OCI-LY7 (cell line): ENCODE measurements at regions of chr10 and their contacts with region 1.

Region 1: GRCh38 chr10:45672181-45673073 is at the start of gene ZFAND4:
- DNase-seq: peak; percentile 97
- H3K4me3 ChIP-seq: peak within 1 kb of the TSS; percentile 89
- H3K27ac ChIP-seq: peak within 1 kb of the TSS; percentile 71
- H3K4me1 ChIP-seq: peaks cover 9% of the 10 kb centered on the region
- CTCF ChIP-seq: peak; percentile 72
- total RNA-seq, gene ZFAND4: 15.1 and 18.6 TPM in 2 replicates

Region 2: DNA sequence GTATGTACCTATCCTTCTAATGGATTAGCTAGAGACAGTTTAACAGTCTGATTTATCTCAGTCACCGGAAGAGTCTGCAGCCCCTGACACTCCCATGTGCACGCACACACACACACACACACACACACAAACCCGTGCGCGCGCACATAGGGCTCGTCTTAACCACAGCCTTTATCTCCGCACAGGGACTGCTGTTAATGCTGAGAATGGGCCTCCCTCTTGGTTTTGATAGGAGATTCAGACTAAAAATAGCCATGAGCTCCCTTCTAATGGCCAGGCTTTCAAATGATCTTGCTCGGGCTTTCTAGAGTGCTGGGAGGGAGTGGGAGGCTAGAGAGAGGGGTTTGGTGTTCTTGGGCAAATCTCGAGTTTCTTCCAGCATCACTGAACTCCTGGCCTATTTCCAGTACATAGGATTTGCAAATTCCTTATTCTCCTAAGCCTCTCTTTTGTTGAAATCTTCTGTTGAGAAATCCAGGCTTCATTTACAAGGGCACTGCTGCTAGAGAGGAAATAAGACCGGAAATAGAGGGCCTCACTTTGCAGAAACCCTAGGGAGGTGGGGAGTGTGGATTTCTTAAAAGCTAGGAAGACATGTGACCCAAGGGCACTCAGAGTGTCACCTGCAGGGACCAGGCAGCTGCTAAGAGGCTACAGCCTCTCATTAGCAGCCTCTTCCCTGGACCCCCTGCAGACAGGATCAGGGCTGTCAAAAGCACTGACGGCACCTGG is 758.9 kb before region 1 on chr10:
- CTCF ChIA-PET with region 1: no interaction called
- POLR2A ChIA-PET with region 1: no interaction called
- intact Hi-C with region 1: no loop called
- DNase-seq: peak; percentile 31
- H3K4me3 ChIP-seq: no peak overlapping the region
- H3K27ac ChIP-seq: no peak overlapping the region
- H3K4me1 ChIP-seq: peaks cover 9% of the 10 kb centered on the region
- CTCF ChIP-seq: no peak

Region 3: DNA sequence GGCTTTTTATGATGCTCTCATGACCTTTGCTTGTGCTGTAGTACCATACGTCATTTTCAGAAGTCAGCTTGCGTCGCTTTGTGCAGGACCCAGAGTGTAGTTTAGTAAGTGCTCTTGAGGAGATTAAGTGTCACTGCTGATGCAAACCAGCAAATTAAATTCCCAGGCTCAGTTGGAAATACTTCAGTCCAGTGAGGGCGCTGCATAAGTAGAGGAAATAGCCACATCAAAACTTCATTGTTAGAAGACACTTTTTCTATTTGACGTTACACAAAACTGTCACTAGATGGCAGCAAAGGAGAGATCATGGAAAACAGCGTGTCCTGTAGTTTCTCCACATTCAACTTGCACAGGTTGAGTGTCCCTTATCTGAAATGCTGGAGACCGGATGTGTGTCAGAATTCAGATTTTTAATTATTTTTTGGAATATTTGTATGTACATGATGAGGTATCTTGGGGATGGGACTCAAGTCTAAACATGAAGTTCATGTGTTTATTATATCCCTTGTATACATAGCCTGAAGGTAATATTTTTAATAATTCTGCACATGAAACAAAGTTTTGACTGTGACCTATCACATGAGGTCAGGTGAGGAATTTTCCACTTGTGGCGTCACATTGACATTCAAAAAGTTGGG is 663.8 kb before region 1 on chr10:
- CTCF ChIA-PET with region 1: no interaction called
- POLR2A ChIA-PET with region 1: no interaction called
- intact Hi-C with region 1: loop called (anchors 10 kb)
- DNase-seq: peak; percentile 84
- H3K4me3 ChIP-seq: no peak overlapping the region
- H3K27ac ChIP-seq: no peak overlapping the region
- H3K4me1 ChIP-seq: no peaks in the 10 kb centered on the region
- CTCF ChIP-seq: peak; percentile 96

Region 4: DNA sequence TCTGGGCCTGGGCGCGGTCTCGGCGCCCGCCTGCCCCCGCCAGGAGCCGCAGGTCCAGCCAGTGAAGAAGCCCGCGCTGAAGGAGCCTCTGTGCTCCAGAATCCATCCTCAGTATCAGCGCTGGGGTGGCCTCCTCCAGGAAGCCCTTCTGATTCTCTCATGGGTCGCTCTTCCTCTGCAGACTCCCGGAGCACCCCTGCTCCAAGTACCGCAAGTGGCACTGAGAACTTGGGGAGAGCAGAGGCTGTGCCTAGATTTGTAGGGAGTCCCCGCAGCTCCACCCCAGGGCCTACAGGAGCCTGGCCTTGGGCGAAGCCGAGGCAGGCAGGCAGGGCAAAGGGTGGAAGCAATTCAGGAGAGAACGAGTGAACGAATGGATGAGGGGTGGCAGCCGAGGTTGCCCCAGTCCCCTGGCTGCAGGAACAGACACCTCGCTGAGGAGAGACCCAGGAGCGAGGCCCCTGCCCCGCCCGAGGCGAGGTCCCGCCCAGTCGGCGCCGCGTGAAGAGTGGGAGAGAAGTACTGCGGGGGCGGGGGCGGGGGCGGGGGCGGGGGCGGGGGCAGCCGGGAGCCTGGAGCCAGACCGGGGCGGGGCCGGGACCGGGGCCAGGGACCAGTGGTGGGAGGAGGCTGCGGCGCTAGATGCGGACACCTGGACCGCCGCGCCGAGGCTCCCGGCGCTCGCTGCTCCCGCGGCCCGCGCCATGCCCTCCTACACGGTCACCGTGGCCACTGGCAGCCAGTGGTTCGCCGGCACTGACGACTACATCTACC is 298.7 kb before region 1 on chr10 and contains the start of gene ALOX5:
- CTCF ChIA-PET with region 1: no interaction called
- POLR2A ChIA-PET with region 1: interaction called, 3 read pairs
- intact Hi-C with region 1: loop called (anchors 5 kb)
- DNase-seq: peak; percentile 88
- H3K4me3 ChIP-seq: peak within 1 kb of the TSS; percentile 89
- H3K27ac ChIP-seq: peak within 1 kb of the TSS; percentile 98
- H3K4me1 ChIP-seq: peaks cover 63% of the 10 kb centered on the region
- CTCF ChIP-seq: no peak
- total RNA-seq, gene ALOX5: 146 and 164 TPM in 2 replicates

Region 5: DNA sequence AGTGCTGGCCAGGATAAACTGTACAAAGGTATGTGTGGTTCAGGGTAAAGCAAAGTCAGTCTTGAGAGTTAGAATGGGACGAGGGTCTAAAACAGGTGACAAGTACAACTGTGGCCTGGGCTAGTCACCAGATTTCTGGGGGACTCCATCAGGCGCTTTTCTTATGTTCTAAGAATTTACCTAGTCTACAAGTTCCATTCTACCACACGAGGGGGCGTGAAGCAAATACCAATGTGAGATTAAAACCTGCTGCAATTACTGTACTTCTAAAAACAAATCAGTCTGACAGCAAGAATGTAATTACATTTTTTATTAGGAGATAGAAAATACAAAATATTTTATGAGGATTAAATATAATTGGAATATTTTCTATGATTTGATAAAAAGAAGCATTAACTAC is 152.0 kb before region 1 on chr10:
- CTCF ChIA-PET with region 1: no interaction called
- POLR2A ChIA-PET with region 1: interaction called, 4 read pairs
- intact Hi-C with region 1: loop called (anchors 5 kb)
- DNase-seq: peak; percentile 65
- H3K4me3 ChIP-seq: no peak overlapping the region
- H3K27ac ChIP-seq: no peak overlapping the region
- H3K4me1 ChIP-seq: no peaks in the 10 kb centered on the region
- CTCF ChIP-seq: peak; percentile 80

Region 6: DNA sequence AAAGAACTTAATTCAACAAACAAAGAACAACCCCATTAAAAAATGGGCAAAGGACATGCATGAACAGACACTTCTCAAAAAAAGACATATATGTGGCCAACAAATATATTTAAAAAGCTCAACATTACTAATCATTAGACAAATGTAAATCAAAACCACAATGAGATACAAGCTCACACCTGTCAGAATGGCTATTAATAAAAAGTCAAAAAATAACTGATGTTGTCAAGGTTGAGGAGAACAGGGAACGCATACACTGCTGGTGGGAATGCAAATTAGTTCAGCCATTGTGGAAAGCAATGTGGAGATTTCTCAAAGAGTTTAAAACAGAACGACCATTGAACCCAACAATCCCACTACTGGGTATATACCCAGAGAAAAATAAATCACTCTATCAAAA is 19.0 kb before region 1 on chr10:
- CTCF ChIA-PET with region 1: no interaction called
- POLR2A ChIA-PET with region 1: interaction called, 29 read pairs
- intact Hi-C with region 1: loop called (anchors 1 kb)
- DNase-seq: peak; percentile 53
- H3K4me3 ChIP-seq: peak overlapping the region; percentile 51
- H3K27ac ChIP-seq: peak overlapping the region; percentile 83
- H3K4me1 ChIP-seq: peaks cover 68% of the 10 kb centered on the region
- CTCF ChIP-seq: no peak